ENCODE measurements at regions of chr17 and their contacts with region 1.

Region 1: GRCh38 chr17:75749545-75750389 is 15.2 kb downstream of the GALK1 start:
- DNase-seq: no peak
- H3K4me3 ChIP-seq: no peak overlapping the region
- H3K27me3 ChIP-seq: no peaks in the 10 kb centered on the region
- CTCF ChIP-seq: peak; percentile 92

Region 2: DNA sequence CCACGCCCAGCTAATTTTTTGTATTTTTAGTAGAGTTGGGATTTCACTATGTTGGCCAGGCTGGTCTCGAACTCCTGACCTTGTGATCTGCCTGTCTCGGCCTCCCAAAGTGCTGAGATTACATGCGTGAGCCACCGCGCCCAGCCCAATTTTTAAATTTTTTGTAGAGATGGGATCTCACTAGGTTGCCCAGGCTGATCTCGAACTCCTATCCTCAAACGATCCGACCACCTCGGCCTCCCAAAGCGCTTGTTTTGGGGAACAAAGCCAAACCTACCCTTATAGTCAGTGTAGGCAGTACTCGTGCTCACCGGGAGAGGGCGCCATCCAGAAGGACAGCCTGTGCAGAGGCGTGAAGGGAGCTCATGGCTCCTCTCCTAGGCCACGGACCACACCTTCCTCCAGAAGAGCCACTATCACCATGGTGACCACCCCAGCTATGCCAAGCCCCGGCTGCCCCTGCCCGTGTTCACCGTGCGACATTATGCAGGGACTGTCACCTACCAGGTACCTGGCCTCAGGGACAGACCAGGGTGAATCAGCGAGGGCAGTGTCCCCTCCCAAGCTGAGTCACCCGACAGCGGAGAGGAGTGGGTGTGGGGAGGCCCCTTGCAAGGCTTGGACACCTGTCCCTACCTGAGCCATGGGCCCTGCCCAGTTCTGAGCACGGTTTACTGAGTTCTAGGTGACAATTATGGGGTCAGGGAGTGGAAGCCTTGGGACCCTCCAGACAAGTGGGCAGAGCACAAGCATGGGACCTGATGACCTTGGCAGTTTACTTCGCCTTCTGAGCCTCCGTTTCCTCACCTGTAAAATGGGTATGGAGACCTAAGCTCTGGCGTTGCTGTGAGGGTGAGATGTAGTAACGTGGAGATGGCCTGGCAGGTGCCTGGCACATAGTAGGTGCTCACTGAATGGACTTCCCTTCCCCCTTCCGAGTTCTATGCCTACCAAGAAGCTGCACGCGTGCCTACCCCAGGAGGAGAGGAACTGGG is 148.4 kb before region 1 on chr17:
- CTCF ChIA-PET with region 1: interaction called, 42 read pairs
- POLR2A ChIA-PET with region 1: no interaction called
- DNase-seq: no peak
- H3K4me3 ChIP-seq: no peak overlapping the region
- H3K27me3 ChIP-seq: no peaks in the 10 kb centered on the region
- CTCF ChIP-seq: peak; percentile 70

Region 3: GRCh38 chr17:75645889-75646637 is 103.7 kb before region 1 on chr17:
- CTCF ChIA-PET with region 1: interaction called, 55 read pairs
- POLR2A ChIA-PET with region 1: no interaction called
- DNase-seq: no peak
- H3K4me3 ChIP-seq: no peak overlapping the region
- H3K27me3 ChIP-seq: no peaks in the 10 kb centered on the region
- CTCF ChIP-seq: no peak

Region 4: GRCh38 chr17:75667021-75667790 is 82.6 kb before region 1 on chr17 and contains the starts of genes RECQL5 and SAP30BP:
- CTCF ChIA-PET with region 1: interaction called, 607 read pairs
- POLR2A ChIA-PET with region 1: no interaction called
- DNase-seq: peak; percentile 88
- H3K4me3 ChIP-seq: peak within 1 kb of the TSS; percentile 73
- H3K27me3 ChIP-seq: no peaks in the 10 kb centered on the region
- CTCF ChIP-seq: no peak
- polyA plus RNA-seq, gene RECQL5: 8.2 and 14.2 TPM in 2 replicates
- polyA plus RNA-seq, gene SAP30BP: 65.3 and 84.8 TPM in 2 replicates

Region 5: GRCh38 chr17:75725500-75725899 is 24.3 kb before region 1 on chr17:
- CTCF ChIA-PET with region 1: interaction called, 13 read pairs
- POLR2A ChIA-PET with region 1: no interaction called
- DNase-seq: no peak
- H3K4me3 ChIP-seq: no peak overlapping the region
- H3K27me3 ChIP-seq: peaks cover 8% of the 10 kb centered on the region
- CTCF ChIP-seq: no peak

Region 6: DNA sequence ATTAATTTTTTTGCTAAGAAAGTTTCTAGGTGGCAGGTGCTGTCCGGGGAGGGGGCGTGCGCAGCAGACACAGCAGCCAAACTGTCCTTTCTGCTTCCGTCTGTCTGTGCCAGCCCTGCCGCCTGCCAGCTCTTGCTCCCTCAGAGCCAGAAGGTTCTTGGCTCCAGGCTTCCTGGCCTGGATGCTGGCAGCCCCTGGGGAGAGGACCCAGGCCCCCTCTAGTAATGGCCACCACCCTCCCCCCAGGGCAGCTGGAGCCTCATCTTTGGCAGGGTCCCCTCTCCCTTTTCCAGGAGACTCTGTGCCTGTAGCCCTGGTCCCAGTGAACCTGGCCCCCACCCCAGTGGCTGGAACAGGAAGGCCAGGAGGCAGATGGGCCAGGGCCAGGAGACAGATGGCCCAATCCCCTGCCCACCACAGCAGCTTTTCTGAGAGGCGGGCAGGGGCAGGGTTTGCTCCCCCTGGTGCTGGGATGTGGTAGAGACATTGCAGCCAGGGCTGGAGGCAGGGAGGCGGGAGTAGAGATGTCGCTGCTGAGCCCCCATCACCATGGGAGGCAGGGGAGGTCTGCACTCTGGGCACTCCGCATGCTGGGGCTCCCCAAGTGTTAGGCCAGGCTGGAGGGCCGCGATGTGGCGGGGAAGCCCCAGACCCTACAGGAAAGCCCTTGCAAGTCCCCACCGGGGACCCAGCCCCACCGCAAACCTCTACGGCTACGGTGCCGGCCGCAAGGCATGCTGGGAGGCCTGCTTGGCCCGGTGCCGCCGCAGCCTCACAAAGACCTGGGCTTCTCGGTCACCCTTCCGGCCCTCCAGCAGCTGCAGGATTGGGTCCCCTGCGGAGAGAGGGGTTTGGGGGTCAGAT is 77.7 kb after region 1 on chr17:
- CTCF ChIA-PET with region 1: interaction called, 12 read pairs
- POLR2A ChIA-PET with region 1: no interaction called
- DNase-seq: no peak
- H3K4me3 ChIP-seq: no peak overlapping the region
- H3K27me3 ChIP-seq: no peaks in the 10 kb centered on the region
- CTCF ChIP-seq: peak; percentile 79

Measured in BJ (cell line).